HepG2 (cell line): ENCODE measurements at regions of chr15 and their contacts with region 1.

Region 1: DNA sequence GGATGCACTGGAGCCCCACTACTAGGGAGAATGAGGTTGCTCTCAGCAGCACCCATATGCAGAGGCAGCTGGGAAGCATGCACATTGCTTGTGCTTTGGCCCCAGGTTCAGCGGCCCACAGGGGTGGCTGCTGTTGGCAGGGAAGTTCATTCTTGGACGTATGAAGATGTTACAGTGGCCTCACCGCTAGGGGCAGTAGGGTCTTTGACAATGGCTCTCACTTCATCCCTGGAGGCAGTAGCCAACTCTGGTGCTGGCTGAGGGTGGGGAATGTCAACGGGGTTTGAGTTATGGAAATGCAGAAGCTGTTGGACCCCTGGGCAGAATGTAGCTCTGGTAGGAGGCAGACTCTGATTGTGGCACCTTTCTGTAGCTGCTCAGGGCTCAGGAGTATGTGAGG is 279.9 kb downstream of the SCAPER start:
- DNase-seq: no peak
- ATAC-seq: peak; percentile 67
- H3K4me3 ChIP-seq: no peak overlapping the region
- H3K27ac ChIP-seq: no peak overlapping the region
- H3K4me1 ChIP-seq: no peaks in the 10 kb centered on the region
- H3K27me3 ChIP-seq: no peaks in the 10 kb centered on the region
- CTCF ChIP-seq: peak; percentile 28; the same call in 1 of the 2 replicates
- EP300 ChIP-seq: no peak
- POLR2A ChIP-seq: no peak
- RAD21 ChIP-seq: no peak

Region 2: GRCh38 chr15:76648732-76649444 is 23.6 kb after region 1 on chr15:
- CTCF ChIA-PET with region 1: no interaction called
- POLR2A ChIA-PET with region 1: no interaction called
- in situ Hi-C with region 1: no loop called
- intact Hi-C with region 1: no loop called
- DNase-seq: no peak
- ATAC-seq: no peak
- H3K4me3 ChIP-seq: no peak overlapping the region
- H3K27ac ChIP-seq: no peak overlapping the region
- H3K4me1 ChIP-seq: peaks cover 18% of the 10 kb centered on the region
- H3K27me3 ChIP-seq: no peaks in the 10 kb centered on the region
- CTCF ChIP-seq: no peak
- EP300 ChIP-seq: no peak
- POLR2A ChIP-seq: no peak
- RAD21 ChIP-seq: no peak

Region 3: DNA sequence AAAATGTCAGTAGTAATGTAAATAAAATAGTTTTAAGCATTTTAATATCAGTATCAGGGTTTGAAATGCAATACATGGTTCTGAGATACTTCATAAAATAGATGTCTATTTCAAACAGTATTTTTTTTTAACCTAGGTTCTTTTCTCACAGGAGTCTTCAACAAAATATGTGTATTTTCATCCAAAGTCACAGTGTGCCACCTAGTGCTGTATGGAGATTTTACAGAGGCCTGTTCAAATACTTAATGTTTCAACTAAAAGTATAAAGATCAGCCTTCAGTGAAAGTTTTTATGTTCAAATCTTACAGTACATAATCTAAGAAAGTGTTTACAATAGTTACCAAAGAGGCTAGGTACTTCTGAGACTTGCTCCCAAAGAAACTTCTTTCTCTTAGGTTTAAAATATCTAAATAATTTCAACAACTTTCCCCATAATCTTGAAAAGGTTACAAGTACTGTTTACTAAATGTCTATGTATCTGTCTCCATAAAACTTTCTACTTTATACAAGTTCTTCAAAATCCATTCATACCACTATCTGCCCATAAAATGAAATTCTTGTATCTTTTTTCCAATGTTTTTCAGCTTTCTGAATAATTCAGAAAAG is 241.6 kb after region 1 on chr15:
- CTCF ChIA-PET with region 1: no interaction called
- POLR2A ChIA-PET with region 1: no interaction called
- in situ Hi-C with region 1: no loop called
- intact Hi-C with region 1: loop called (anchors 10 kb)
- DNase-seq: peak; percentile 34
- ATAC-seq: no peak
- H3K4me3 ChIP-seq: no peak overlapping the region
- H3K27ac ChIP-seq: no peak overlapping the region
- H3K4me1 ChIP-seq: no peaks in the 10 kb centered on the region
- H3K27me3 ChIP-seq: no peaks in the 10 kb centered on the region
- CTCF ChIP-seq: peak; percentile 51
- EP300 ChIP-seq: no peak
- POLR2A ChIP-seq: no peak
- RAD21 ChIP-seq: peak; percentile 43; the same call in 1 of the 2 replicates